ENCODE measurements at regions of chr1 and their contacts with region 1.

Region 1: DNA sequence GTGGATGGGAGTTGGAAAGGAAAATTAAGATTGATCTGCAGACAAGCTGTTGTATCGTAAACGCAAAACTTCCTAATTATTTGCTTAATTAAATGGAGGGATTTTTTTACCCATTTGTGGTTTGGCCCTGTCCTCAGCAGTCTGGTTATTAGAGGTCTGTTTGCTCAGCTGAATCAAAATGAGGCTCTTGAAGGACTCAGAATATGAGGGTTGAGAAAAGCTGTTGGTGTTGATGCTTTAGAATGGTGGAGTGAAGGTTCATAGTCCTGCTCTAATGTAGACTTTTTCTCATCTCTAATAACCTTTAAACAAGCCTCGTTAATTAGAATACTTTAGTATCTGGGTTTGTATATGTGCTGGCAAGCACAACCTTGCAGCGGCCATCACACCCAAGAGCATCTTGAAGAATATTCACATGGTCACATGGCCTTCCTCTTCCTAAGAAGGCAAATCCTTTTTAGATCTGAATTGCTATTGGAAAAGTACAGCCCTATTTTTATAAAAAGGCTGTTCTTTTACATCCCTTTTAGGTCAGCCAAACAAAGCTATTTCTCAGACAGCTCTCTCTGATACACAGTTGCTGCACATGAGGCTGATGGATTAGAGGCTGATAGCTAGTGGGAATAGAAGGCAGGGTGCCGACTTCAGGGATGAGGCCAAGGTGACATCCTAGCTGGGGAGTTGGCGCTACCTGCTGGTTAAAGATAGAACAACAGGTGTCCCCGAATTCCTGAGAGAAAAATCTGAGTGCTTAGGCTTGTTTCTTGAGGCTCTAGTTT is 53.8 kb downstream of the MACF1 start:
- DNase-seq: no peak
- H3K4me3 ChIP-seq: no peak overlapping the region
- CTCF ChIP-seq: peak; percentile 66

Region 2: DNA sequence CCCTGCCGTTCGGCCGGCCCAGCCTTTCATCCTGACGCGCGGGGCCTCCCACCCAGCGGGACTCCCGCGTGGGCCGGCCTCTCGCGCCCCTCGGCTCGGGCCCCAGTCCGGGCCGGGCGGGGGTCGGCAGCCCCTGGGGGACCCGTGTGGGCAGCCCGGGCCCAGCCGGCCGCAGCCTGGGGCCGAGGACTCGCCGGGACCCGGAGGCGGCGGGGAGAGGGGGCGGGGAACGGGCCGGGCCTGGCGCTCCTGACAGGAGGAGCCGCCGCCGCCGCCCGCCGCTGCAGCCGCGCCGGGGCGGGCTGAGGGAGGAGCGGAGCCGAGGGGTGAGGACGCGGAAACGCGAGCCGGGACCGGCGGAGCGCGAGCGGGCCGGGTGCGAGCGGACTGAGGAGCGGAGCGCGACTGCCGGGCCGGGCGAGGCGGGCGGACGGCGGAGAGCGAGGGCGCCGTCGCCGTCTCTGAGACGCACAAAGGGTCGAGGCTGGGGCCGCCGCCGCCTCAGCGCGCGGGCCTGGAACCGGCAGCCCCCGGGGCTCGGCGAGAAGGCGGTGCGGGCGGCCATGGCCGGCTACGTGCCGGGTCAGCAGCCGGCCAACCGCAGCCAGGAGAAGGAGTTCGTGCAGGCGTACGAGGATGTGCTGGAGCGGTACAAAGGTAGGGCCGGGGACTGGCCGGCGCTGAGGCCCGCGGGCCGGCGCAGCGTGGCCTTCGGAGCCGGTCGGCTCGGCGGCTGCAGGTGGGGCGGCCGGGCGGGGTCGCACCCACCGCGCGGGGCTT is 153.1 kb before region 1 on chr1:
- CTCF ChIA-PET with region 1: interaction called, 70 read pairs
- POLR2A ChIA-PET with region 1: no interaction called
- DNase-seq: no peak
- H3K4me3 ChIP-seq: peak overlapping the region; percentile 79
- CTCF ChIP-seq: no peak

Region 3: DNA sequence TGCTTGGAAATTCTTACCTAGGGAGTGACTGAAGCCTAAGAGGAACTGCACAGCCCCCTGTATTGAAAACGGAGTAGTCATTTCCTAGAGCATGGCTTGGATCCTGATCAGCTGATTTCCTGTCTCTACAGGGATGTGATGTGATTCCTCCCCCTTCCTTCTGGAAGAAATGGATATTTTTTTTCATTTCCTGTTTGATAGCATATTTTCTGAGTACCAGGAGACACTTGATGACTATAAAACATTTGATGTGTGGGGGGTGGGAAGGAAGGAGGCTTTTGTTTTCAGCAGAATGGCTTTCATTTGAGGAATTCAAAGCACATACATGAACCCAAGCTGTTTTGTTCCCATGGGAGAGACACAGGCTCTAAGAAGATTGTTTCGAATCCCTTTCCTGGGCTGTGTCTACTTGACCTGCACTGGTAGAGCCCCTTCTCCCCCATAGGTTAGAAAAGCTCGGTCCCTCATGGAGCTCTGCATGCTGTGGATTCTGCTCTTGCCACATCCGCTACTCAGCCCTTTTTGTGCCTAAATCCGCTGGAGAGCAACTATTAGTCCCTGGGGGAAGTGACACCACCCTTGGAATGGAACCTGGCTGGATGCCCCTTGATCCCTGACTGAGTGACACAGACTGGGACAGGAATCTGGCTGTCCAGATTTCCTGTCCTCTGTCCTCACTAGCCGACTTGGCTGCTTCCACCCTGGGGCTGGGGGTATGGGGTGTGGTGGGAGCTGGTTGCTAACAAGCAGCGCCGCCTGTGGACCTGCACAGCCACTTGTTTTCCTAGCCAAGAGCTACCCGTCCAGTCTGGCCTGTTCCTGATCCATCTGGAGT is 125.6 kb before region 1 on chr1:
- CTCF ChIA-PET with region 1: interaction called, 21 read pairs
- POLR2A ChIA-PET with region 1: no interaction called
- DNase-seq: no peak
- H3K4me3 ChIP-seq: no peak overlapping the region
- CTCF ChIP-seq: no peak

Region 4: GRCh38 chr1:39178541-39179431 is 79.5 kb before region 1 on chr1:
- CTCF ChIA-PET with region 1: no interaction called
- POLR2A ChIA-PET with region 1: no interaction called
- DNase-seq: no peak
- H3K4me3 ChIP-seq: no peak overlapping the region
- CTCF ChIP-seq: no peak

Region 5: GRCh38 chr1:39204441-39205081 is 53.8 kb before region 1 on chr1 and contains the start of gene MACF1:
- CTCF ChIA-PET with region 1: interaction called, 33 read pairs
- POLR2A ChIA-PET with region 1: no interaction called
- DNase-seq: peak; percentile 81
- H3K4me3 ChIP-seq: peak within 1 kb of the TSS; percentile 70
- CTCF ChIP-seq: peak; percentile 41

Region 6: GRCh38 chr1:39214998-39215873 is 43.1 kb before region 1 on chr1:
- CTCF ChIA-PET with region 1: interaction called, 10 read pairs
- POLR2A ChIA-PET with region 1: no interaction called
- DNase-seq: no peak
- H3K4me3 ChIP-seq: no peak overlapping the region
- CTCF ChIP-seq: no peak

Region 7: DNA sequence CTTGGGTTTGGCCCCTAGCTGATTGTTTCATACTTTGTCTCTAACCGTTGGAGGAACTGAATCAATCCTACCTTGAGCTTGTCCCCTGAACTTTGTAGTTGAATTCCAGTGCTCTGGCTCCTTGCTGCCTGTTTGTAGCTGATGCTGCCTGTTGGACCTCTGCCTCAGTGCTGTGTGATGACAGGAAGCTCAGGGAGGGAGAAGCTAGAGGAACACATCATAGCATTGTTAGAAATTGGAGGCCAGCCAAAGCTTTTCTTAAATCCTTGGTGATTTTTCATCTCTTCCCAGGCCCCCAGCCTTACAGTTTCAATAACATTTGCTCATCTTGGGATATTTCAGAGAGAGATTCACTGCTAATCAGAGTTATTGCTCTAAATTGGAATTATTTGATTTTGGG is 19.9 kb before region 1 on chr1:
- CTCF ChIA-PET with region 1: interaction called, 18 read pairs
- POLR2A ChIA-PET with region 1: interaction called, 3 read pairs
- DNase-seq: peak; percentile 65
- H3K4me3 ChIP-seq: no peak overlapping the region
- CTCF ChIP-seq: no peak

Region 8: DNA sequence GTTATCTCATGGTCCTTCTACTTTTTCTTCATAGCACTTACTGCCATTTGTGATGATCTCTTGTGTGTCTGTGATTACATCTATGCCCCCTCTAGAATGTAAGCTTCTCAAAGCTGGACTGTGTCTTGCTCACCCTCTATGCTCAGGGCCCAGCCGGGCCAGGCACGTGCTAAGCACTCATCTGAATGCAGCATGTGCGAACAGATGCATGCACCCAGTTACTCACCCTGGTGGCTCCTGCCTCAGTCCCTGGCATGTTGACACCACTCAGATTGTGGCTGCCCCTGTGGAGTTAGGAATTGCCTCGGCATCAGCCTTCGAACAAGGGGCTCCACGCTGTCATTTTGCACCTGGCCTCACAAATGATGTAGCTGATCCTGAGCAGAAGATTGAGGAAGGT is 337.8 kb after region 1 on chr1:
- CTCF ChIA-PET with region 1: no interaction called
- POLR2A ChIA-PET with region 1: no interaction called
- DNase-seq: no peak
- H3K4me3 ChIP-seq: no peak overlapping the region
- CTCF ChIP-seq: no peak